HepG2 (cell line): ENCODE measurements at regions of chr1 and their contacts with region 1.

Region 1: DNA sequence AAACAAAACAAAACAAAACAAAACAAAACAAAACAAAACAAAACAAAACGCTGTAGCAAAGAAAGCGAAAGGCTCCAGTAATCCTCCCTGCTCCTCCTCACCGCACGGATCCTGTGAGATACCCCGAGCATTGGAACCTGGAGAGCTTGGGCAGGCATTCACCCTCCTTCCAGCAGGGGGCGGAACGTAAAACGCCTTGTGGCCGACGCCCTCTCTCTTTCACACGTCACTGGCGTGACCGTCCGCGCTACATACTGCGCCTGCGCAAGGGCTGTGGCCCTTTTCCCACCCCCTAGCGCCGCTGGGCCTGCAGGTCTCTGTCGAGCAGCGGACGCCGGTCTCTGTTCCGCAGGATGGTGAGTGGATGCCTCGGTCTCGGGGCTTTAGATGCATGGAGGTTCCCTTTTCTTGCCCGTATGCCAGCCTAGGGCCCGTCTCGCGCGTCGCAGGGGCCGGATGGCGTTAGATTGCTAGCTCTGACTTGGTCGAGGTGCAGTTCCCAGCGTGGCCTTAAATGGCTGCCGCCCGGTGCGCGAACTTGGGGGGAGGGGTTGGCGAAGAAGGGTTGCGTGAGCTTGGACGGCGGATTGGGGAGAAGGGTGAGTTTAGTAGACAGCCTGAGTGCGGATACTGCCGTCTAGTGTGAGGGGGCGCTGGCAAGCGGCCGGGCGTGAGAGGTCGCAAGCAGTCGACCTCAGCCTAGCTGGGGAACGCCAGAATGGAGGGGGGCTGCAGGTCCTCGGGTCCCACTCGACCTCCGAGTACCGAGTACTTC is at the start of gene RPL5:
- DNase-seq: peak; percentile 94
- ATAC-seq: peak; percentile 94
- H3K4me3 ChIP-seq: peak within 1 kb of the TSS; percentile 94 to 100 (median 96)
- H3K27ac ChIP-seq: peak within 1 kb of the TSS; percentile 87
- H3K4me1 ChIP-seq: peaks cover 46% of the 10 kb centered on the region
- H3K27me3 ChIP-seq: no peaks in the 10 kb centered on the region; a peak in 1 of 5 replicates
- CTCF ChIP-seq: peak; percentile 97
- EP300 ChIP-seq: no peak; a peak in 1 of 4 replicates
- POLR2A ChIP-seq: peak; percentile 99 to 100
- RAD21 ChIP-seq: peak; percentile 64; the same call in 1 of the 2 replicates
- total RNA-seq, gene RPL5: 2,304 and 2,854 TPM in 2 replicates

Region 2: GRCh38 chr1:92749024-92749634 is 82.8 kb before region 1 on chr1:
- CTCF ChIA-PET with region 1: no interaction called
- POLR2A ChIA-PET with region 1: interaction called, 3 read pairs
- in situ Hi-C with region 1: no loop called
- intact Hi-C with region 1: loop called (anchors 5 kb)
- DNase-seq: peak; percentile 62
- ATAC-seq: peak; percentile 80
- H3K4me3 ChIP-seq: no peak overlapping the region
- H3K27ac ChIP-seq: no peak overlapping the region
- H3K4me1 ChIP-seq: no peaks in the 10 kb centered on the region
- H3K27me3 ChIP-seq: no peaks in the 10 kb centered on the region
- CTCF ChIP-seq: peak; percentile 70
- EP300 ChIP-seq: no peak
- POLR2A ChIP-seq: no peak
- RAD21 ChIP-seq: peak; percentile 53; the same call in 1 of the 2 replicates

Region 3: DNA sequence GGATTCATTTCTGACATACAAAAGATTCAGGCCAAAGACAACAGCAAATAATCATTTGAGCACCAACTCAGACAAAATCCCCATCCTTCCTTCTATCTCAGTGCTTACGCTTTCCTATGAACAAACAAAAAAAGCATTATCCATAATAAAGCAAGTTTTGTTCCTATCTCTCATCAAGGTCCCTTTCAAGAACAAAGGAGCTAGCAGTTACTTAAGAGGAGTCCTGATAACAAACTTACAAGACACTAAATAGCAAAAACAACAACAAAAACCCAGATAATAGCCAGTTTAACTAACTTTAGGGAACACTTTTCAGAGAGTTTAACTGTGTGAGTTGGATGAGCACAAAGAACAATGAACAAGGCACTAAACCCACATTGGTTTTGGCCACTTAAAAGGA is 57.5 kb before region 1 on chr1:
- CTCF ChIA-PET with region 1: no interaction called
- POLR2A ChIA-PET with region 1: no interaction called
- in situ Hi-C with region 1: no loop called
- intact Hi-C with region 1: no loop called
- DNase-seq: no peak
- ATAC-seq: no peak
- H3K4me3 ChIP-seq: no peak overlapping the region
- H3K27ac ChIP-seq: no peak overlapping the region
- H3K4me1 ChIP-seq: peaks cover 12% of the 10 kb centered on the region
- H3K27me3 ChIP-seq: no peaks in the 10 kb centered on the region
- CTCF ChIP-seq: no peak
- EP300 ChIP-seq: no peak
- POLR2A ChIP-seq: no peak
- RAD21 ChIP-seq: no peak

Region 4: DNA sequence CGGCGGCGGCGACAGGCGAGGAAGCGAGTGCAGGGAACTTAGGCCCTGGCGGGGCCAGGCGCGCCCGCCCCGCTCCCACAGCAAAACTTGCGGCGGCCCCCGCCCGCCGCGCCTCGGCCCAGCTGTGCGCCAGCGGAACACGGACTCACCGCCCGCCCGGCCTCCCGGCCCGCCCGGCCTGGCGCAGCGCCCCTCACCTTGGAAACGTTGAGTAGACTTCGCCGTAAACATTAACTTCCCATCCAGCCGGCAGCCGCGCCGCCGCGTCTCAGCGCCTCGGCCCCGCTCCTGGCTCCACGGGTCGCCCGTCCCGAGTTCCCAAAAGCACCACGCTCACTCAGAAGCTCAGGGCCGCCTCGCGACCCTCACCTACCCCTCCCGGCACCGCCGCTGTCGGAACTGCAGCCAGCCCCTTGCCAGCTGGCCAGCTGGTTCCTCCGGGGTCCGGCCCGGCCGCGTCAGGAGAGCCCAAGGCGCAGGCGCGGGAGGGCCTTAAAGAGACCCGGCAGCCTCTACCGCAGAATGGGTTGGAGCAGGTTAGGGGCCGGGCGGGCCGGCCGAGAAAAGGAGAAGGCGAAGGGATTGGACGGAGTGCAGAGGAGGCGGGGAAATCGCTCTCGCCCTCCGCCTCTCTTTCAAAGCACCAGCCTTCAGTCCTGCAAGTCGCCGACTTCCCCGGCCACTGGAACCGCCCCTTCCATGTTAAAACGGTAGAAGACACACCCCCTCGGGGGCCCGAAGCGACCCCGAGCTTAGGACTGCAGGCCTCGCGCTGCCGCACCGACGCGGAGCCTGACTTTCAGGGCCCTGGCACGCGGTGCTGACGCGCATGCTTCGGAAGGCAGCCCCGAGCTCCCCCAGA is 47.1 kb before region 1 on chr1 and contains the start of gene EVI5:
- CTCF ChIA-PET with region 1: no interaction called
- POLR2A ChIA-PET with region 1: interaction called, 23 read pairs
- in situ Hi-C with region 1: no loop called
- intact Hi-C with region 1: no loop called
- DNase-seq: peak; percentile 92
- ATAC-seq: peak; percentile 97
- H3K4me3 ChIP-seq: peak within 1 kb of the TSS; percentile 88 to 94 (median 90)
- H3K27ac ChIP-seq: peak within 1 kb of the TSS; percentile 91
- H3K4me1 ChIP-seq: peaks cover 32% of the 10 kb centered on the region
- H3K27me3 ChIP-seq: peaks cover 0 to 1% of the 10 kb centered on the region in 2 experiments; a peak in 2 of 5 replicates
- CTCF ChIP-seq: peak; percentile 22; the same call in 1 of the 2 replicates
- EP300 ChIP-seq: no peak
- POLR2A ChIP-seq: peak; percentile 74 to 78
- RAD21 ChIP-seq: no peak; the same call in 1 of the 2 replicates
- total RNA-seq, gene EVI5: 12.6 and 17.5 TPM in 2 replicates

Region 5: GRCh38 chr1:92960395-92961130 is 128.6 kb after region 1 on chr1:
- CTCF ChIA-PET with region 1: no interaction called
- POLR2A ChIA-PET with region 1: interaction called, 19 read pairs
- in situ Hi-C with region 1: no loop called
- intact Hi-C with region 1: no loop called
- DNase-seq: peak; percentile 81
- ATAC-seq: peak; percentile 85
- H3K4me3 ChIP-seq: peak overlapping the region; percentile 81 to 89 (median 84)
- H3K27ac ChIP-seq: peak overlapping the region; percentile 85
- H3K4me1 ChIP-seq: peaks cover 73% of the 10 kb centered on the region
- H3K27me3 ChIP-seq: peaks cover 2 to 13% of the 10 kb centered on the region in 2 experiments; a peak in 2 of 5 replicates
- CTCF ChIP-seq: peak; percentile 93
- EP300 ChIP-seq: no peak
- POLR2A ChIP-seq: 0 out of 4 replicates have a peak, but pooled peaks have one; percentile 10 to 32
- RAD21 ChIP-seq: peak; percentile 79

Region 6: DNA sequence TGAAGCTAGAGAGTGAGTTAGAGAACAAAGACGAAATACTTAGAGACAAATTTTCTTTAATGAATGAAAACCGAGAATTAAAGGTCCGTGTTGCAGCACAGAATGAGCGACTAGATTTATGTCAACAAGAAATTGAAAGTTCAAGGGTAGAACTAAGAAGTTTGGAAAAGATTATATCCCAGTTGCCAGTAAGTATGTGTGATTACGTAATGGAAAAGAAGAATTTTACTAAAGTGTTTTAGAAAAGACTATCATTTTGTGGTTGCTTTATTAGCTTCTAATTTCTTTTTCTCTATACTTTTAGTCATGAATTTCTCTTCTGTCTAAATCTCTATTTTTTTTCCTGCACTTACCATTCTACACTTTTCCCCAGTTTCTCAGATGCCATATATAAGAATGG is 375.3 kb after region 1 on chr1:
- CTCF ChIA-PET with region 1: no interaction called
- POLR2A ChIA-PET with region 1: no interaction called
- in situ Hi-C with region 1: no loop called
- intact Hi-C with region 1: no loop called
- DNase-seq: no peak
- ATAC-seq: no peak
- H3K4me3 ChIP-seq: no peak overlapping the region
- H3K27ac ChIP-seq: no peak overlapping the region
- H3K4me1 ChIP-seq: peaks cover 28% of the 10 kb centered on the region
- H3K27me3 ChIP-seq: no peaks in the 10 kb centered on the region
- CTCF ChIP-seq: no peak
- EP300 ChIP-seq: no peak
- POLR2A ChIP-seq: no peak
- RAD21 ChIP-seq: no peak